AG04449 (cell line): ENCODE measurements at regions of chr4 and their contacts with region 1.

Region 1: DNA sequence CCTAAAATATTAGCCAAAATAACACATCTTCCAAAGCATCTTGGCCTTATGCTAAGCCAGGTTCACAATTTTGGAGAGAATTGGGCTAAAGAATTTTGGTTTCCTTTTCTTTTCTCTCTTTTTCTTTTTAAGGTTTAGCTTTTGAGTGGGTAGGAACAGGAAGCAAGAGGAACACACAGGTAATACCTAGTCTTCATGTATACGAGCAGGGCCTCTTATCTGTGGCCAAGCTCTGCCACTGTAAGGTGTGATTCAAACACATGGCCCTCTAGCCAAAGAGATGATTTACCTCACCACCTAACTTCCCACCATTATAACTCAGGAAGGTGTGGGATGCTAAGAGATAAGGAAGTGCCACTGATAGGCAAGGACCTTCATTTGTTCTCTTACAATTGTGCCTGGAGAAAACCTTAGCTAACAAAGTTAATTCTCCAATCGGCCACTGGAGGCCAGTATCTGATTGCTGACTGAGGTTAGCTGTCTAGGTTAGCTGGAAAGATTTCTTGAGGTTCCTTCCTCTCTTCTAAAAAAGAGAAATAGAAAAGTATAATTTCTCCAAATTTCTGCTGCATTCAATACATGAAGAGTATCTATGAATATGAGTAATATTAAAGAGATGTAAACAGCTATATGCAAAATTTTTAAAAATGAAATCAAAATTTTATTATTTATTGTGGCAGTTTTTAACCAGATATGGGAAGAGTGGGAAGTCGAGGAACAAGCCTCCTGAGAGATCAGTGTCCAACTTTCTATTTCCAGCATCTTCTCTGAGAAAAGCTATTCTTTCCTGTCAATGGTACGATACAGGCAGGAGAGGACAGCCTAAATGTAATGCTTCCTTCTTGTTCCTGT is 30.1 kb upstream of the BBS7 start:
- DNase-seq: peak; percentile 4
- H3K4me3 ChIP-seq: no peak overlapping the region
- CTCF ChIP-seq: peak; percentile 64

Region 2: DNA sequence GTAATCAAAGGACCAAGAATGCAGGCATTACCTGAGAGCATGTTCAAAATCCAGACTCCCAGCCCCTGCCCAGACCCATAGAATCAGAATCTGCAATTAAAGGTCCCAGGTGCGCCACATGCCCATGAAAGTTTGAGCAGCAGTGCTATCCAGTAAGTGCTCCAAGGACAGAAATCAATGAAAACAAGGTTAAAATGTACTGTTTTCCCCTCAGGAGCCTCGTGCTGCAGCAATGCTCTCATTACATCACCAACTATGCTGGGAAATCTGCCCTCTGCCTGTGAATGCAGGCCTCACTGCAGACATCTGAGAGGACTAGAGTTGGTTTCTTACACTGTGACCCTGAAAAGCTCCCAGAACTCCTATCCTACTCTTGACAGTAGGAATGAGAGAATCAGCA is 224.6 kb before region 1 on chr4:
- CTCF ChIA-PET with region 1: no interaction called
- POLR2A ChIA-PET with region 1: no interaction called
- DNase-seq: no peak
- H3K4me3 ChIP-seq: no peak overlapping the region
- CTCF ChIP-seq: peak; percentile 30

Region 3: DNA sequence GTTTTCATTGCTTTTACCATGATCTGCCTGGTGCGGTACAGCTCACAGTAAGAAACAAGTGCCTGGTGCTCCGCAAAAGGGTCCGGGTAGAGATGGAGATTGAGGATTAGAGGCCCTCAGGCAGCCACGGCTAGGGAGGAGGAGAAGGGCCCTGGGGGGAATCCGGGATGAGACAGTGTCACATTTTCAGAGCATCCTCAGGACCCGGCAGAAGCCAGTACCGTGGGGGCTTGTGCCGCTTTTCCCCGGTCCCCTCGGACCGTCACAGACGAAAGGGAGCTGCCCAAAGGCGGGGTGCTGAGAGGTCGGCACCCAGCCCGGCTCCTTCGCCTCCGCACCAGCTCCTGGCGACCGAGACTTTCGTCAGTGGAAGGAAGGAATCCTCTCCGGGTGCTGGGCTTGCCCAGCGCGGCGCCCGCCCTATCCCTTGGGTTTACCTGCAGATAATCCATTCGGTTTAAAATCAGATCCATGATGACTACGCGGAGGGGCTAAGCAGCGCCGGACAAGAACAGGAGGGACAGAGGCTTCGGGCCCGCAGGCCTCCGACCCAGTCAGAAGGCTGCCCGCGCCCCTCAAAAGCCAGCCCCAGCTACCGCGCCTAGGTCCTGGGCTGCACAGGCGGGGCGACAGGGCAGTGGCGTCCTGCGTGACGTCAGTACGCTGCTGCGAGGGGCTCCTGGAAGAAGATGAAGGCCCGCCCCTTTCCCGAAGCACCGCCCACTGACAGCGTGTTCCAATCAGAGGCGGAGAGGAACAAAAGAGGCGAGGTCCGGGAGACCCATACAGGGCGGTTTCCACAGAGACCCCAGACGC is 30.3 kb before region 1 on chr4 and contains the start of gene BBS7:
- CTCF ChIA-PET with region 1: interaction called, 14 read pairs
- POLR2A ChIA-PET with region 1: no interaction called
- DNase-seq: peak; percentile 58
- H3K4me3 ChIP-seq: peak within 1 kb of the TSS; percentile 90
- CTCF ChIP-seq: no peak

Region 4: GRCh38 chr4:121885115-121885514 is 15.2 kb before region 1 on chr4:
- CTCF ChIA-PET with region 1: interaction called, 21 read pairs
- POLR2A ChIA-PET with region 1: no interaction called
- DNase-seq: no peak
- H3K4me3 ChIP-seq: no peak overlapping the region
- CTCF ChIP-seq: no peak